ENCODE measurements at regions of chr9 and their contacts with region 1.

Region 1: GRCh38 chr9:88578121-88579054 is 43.4 kb downstream of the NXNL2 start:
- DNase-seq: peak; percentile 69
- ATAC-seq: peak; percentile 92
- H3K4me3 ChIP-seq: no peak overlapping the region
- H3K27ac ChIP-seq: 0 out of 2 replicates have a peak overlapping the region, but pooled peaks have one; percentile 21
- H3K4me1 ChIP-seq: peaks cover 4% of the 10 kb centered on the region; the same call in 1 of the 2 replicates
- H3K27me3 ChIP-seq: no peaks in the 10 kb centered on the region
- CTCF ChIP-seq: peak; percentile 95
- POLR2A ChIP-seq: no peak
- RAD21 ChIP-seq: peak; percentile 95

Region 2: DNA sequence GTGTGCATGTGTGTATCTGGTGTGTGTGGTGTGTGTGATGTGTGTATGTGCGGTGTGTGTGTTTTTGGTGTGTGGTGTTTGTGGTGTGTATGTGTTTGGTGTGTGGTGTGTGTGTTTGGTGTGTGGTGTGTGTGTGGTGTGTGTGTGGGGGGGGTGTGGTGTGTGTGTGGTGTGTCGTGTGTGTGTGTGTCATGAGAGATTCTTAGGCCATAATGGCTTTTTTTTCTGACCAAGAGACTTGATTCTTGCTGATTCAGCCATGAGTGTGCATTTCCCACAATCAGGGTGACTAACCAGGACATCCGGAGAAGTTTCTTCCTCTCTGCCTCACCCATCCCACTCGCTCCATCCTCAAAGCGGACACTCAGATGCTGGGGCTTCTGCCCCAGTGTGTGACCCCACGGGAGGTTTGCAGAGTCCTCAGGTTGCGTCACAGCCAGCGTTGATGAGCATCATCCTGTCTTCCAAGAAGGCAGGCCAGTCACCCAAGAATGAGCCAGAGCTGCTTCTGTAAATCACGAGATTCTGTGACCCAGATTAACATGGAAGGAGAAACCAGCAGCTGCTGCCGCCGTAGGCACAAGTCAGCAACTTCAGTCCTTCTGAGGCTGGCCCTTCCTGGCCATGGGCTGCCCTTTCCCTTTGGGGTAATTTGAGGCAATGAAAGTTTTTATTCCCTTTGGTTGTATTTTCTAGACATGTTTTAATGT is 865.0 kb before region 1 on chr9:
- CTCF ChIA-PET with region 1: no interaction called
- POLR2A ChIA-PET with region 1: no interaction called
- dilution Hi-C with region 1: no loop called
- in situ Hi-C with region 1: loop called (anchors 25 kb)
- intact Hi-C with region 1: no loop called
- DNase-seq: peak; percentile 99
- ATAC-seq: peak; percentile 87
- H3K4me3 ChIP-seq: peak overlapping the region; percentile 3; the same call in 1 of the 2 replicates
- H3K27ac ChIP-seq: peak overlapping the region; percentile 98
- H3K4me1 ChIP-seq: peaks cover 16% of the 10 kb centered on the region
- H3K27me3 ChIP-seq: no peaks in the 10 kb centered on the region
- CTCF ChIP-seq: 0 out of 2 replicates have a peak, but pooled peaks have one; percentile 8
- POLR2A ChIP-seq: peak; percentile 84
- RAD21 ChIP-seq: no peak

Region 3: GRCh38 chr9:87959916-87960581 is 618.3 kb before region 1 on chr9:
- CTCF ChIA-PET with region 1: no interaction called
- POLR2A ChIA-PET with region 1: no interaction called
- dilution Hi-C with region 1: no loop called
- in situ Hi-C with region 1: loop called (anchors 10 kb)
- intact Hi-C with region 1: no loop called
- DNase-seq: peak; percentile 83
- ATAC-seq: peak; percentile 86
- H3K4me3 ChIP-seq: no peak overlapping the region
- H3K27ac ChIP-seq: peak overlapping the region; percentile 79; the same call in 1 of the 2 replicates
- H3K4me1 ChIP-seq: peaks cover 5% of the 10 kb centered on the region
- H3K27me3 ChIP-seq: peaks cover 2% of the 10 kb centered on the region; the same call in 1 of the 2 replicates
- CTCF ChIP-seq: no peak
- POLR2A ChIP-seq: no peak
- RAD21 ChIP-seq: no peak

Region 4: DNA sequence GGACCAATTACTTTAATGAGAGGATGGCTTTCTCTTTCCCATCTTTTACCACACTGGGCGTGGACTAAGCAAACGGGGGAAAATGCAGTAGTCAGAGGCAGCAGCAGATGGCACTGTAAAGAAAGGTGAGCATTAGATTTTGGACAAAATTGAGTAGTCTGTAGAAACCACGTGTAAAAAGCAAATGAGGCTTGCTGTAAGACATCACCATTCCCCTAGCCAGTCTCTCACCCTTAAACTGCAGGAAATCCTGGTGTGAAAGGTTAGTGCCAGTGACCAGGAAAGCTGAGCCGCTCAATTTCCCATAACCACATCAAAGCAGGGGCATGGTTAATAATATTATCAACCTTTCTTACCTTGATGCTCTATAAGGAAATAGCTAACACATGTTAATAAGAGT is 471.9 kb before region 1 on chr9:
- CTCF ChIA-PET with region 1: interaction called, 5 read pairs
- POLR2A ChIA-PET with region 1: no interaction called
- dilution Hi-C with region 1: no loop called
- in situ Hi-C with region 1: no loop called
- intact Hi-C with region 1: loop called (anchors 2 kb)
- DNase-seq: peak; percentile 36
- ATAC-seq: peak; percentile 77
- H3K4me3 ChIP-seq: no peak overlapping the region
- H3K27ac ChIP-seq: no peak overlapping the region
- H3K4me1 ChIP-seq: no peaks in the 10 kb centered on the region
- H3K27me3 ChIP-seq: peaks cover 6% of the 10 kb centered on the region; the same call in 1 of the 2 replicates
- CTCF ChIP-seq: peak; percentile 58
- POLR2A ChIP-seq: no peak
- RAD21 ChIP-seq: peak; percentile 50

Region 5: GRCh38 chr9:88197781-88198340 is 380.5 kb before region 1 on chr9:
- CTCF ChIA-PET with region 1: interaction called, 3 read pairs
- POLR2A ChIA-PET with region 1: no interaction called
- dilution Hi-C with region 1: no loop called
- in situ Hi-C with region 1: no loop called
- intact Hi-C with region 1: loop called (anchors 5 kb)
- DNase-seq: peak; percentile 87
- ATAC-seq: peak; percentile 76
- H3K4me3 ChIP-seq: peak overlapping the region; percentile 42; the same call in 1 of the 2 replicates
- H3K27ac ChIP-seq: peak overlapping the region; percentile 78
- H3K4me1 ChIP-seq: peaks cover 4% of the 10 kb centered on the region
- H3K27me3 ChIP-seq: no peaks in the 10 kb centered on the region
- CTCF ChIP-seq: no peak
- POLR2A ChIP-seq: no peak
- RAD21 ChIP-seq: no peak

Region 6: DNA sequence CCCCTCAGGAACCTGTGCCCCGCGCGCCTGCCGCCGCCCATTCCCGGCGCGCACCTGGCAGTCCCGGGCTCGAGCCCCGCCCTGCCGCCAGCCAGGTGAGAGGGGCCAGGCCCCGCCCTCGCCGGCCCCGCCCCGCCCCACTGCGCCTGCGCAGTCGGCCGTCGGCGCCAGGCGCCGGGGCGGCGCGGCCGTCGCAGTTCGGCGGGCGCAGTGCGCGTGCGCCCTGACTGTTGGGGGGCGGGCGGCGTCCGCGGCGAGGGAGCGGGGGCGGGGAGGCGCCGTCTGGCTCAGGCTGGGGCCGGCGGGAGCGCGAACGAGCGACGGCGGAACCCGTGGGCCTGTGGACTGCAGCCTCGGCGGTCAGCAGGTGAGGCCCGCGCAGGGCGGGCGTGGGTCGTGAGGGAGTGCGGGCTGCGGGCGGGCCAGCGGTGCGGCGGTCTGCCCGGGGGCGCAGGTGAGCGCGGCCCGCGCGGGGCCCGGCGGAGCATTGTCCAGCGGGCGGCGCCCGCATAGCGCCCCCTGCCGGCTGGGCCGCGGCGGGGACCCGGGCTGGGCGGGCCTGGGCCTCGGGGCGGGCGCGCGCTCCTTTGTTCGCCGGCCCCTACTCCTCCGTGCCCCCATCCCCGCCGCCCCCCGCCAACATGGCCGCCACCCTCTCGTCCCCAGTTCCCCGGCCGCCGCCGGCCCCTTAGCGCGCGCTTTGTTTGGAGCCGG is 190.1 kb before region 1 on chr9 and contains the start of gene SPIN1:
- CTCF ChIA-PET with region 1: no interaction called
- POLR2A ChIA-PET with region 1: no interaction called
- dilution Hi-C with region 1: no loop called
- in situ Hi-C with region 1: loop called (anchors 10 kb)
- intact Hi-C with region 1: loop called (anchors 2 kb)
- DNase-seq: peak; percentile 62
- ATAC-seq: peak; percentile 90
- H3K4me3 ChIP-seq: peak within 1 kb of the TSS; percentile 84
- H3K27ac ChIP-seq: peak within 1 kb of the TSS; percentile 94
- H3K4me1 ChIP-seq: peaks cover 13% of the 10 kb centered on the region
- H3K27me3 ChIP-seq: no peaks in the 10 kb centered on the region
- CTCF ChIP-seq: peak; percentile 64
- POLR2A ChIP-seq: 0 out of 2 replicates have a peak, but pooled peaks have one; percentile 30
- RAD21 ChIP-seq: peak; percentile 44
- total RNA-seq, gene SPIN1: 141 and 189 TPM in 2 replicates

Region 7: GRCh38 chr9:88476491-88477271 is 101.7 kb before region 1 on chr9:
- CTCF ChIA-PET with region 1: no interaction called
- POLR2A ChIA-PET with region 1: no interaction called
- dilution Hi-C with region 1: no loop called
- in situ Hi-C with region 1: no loop called
- intact Hi-C with region 1: loop called (anchors 5 kb)
- DNase-seq: peak; percentile 28
- ATAC-seq: peak; percentile 8; the same call in 1 of the 2 replicates
- H3K4me3 ChIP-seq: no peak overlapping the region
- H3K27ac ChIP-seq: peak overlapping the region; percentile 84
- H3K4me1 ChIP-seq: peaks cover 19% of the 10 kb centered on the region
- H3K27me3 ChIP-seq: no peaks in the 10 kb centered on the region
- CTCF ChIP-seq: no peak
- POLR2A ChIP-seq: no peak
- RAD21 ChIP-seq: no peak

Region 8: DNA sequence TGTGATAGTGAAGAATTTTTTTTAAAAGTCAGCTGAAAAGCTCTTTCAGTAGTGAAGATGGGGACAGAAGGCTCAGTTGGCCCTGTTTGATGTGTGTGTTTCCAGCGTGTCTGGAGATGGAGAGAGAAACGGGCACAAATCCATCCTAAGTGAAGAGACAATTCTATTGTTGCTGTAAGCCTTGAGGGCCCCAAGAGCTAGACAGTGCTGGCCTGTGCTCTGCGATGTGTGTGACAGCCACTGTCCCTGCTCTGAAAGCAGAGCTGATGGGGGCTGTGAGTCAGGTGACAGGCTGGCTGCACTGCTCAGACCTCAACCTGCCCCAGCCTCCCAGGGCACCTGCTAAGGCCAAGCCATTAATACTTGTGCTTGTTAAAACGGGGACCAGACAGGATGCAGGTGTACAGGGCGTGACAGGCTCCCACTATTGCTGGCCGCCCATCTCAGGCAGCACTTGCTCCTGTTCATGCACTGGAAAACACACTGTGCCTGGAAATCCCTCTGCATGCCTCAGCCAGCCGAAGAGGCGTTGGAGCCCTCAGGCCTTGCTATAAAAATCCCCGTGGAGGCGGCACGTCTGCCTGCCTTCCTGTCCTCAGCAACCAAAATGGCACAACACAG is 964.1 kb after region 1 on chr9:
- CTCF ChIA-PET with region 1: no interaction called
- POLR2A ChIA-PET with region 1: no interaction called
- dilution Hi-C with region 1: no loop called
- in situ Hi-C with region 1: no loop called
- intact Hi-C with region 1: no loop called
- DNase-seq: no peak
- ATAC-seq: no peak
- H3K4me3 ChIP-seq: no peak overlapping the region
- H3K27ac ChIP-seq: no peak overlapping the region
- H3K4me1 ChIP-seq: no peaks in the 10 kb centered on the region
- H3K27me3 ChIP-seq: peaks cover 10% of the 10 kb centered on the region; the same call in 1 of the 2 replicates
- CTCF ChIP-seq: no peak
- POLR2A ChIP-seq: no peak
- RAD21 ChIP-seq: no peak